WTC11 (cell line): ENCODE measurements at regions of chr5 and their contacts with region 1.

Region 1: GRCh38 chr5:8908055-8908683 is 637.7 kb downstream of the SEMA5A start:
- DNase-seq: peak; percentile 78
- ATAC-seq: peak; percentile 99
- H3K4me3 Mint-ChIP-seq: no peak overlapping the region
- H3K27ac Mint-ChIP-seq: no peak overlapping the region
- H3K4me1 Mint-ChIP-seq: peaks cover 4% of the 10 kb centered on the region; the same call in 1 of the 2 replicates
- H3K27me3 Mint-ChIP-seq: no peaks in the 10 kb centered on the region
- CTCF ChIP-seq: peak; percentile 92

Region 2: DNA sequence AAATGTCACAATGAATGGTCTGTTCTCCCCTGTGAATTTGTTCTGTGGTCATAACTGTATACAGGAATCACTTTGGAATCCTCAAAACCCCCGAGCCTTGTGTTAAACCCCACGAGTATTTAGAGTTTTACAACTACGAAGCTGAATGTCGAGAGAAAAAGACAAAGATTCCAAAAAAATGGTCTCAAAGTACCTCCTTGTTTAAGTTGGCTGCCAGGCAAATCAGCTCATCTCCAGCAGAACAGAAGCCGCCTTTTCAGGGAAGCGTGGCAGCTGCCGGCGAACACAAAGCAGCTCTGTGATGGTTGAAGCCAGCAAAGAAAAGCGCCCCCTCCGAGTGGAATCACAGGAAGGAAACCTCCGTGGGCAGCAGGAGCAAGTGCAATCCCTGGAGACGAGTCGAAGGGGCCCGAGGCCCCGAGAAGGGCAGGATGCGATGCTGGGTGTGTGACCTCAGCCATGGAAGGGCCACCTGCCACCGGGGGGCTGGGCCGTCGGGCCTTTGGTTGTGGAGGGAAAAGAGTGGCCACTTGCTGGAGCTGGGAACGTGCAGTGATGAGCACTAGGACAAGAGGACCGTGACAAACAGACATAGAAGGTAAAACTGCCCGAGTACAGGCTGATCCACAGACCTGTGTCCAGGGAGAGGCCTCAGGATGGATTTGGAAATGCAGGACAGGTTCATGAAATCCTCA is 68.7 kb before region 1 on chr5:
- CTCF ChIA-PET with region 1: interaction called, 15 read pairs
- POLR2A ChIA-PET with region 1: no interaction called
- DNase-seq: no peak
- ATAC-seq: no peak
- H3K4me3 Mint-ChIP-seq: no peak overlapping the region
- H3K27ac Mint-ChIP-seq: no peak overlapping the region
- H3K4me1 Mint-ChIP-seq: no peaks in the 10 kb centered on the region
- H3K27me3 Mint-ChIP-seq: peaks cover 5% of the 10 kb centered on the region
- CTCF ChIP-seq: no peak

Region 3: DNA sequence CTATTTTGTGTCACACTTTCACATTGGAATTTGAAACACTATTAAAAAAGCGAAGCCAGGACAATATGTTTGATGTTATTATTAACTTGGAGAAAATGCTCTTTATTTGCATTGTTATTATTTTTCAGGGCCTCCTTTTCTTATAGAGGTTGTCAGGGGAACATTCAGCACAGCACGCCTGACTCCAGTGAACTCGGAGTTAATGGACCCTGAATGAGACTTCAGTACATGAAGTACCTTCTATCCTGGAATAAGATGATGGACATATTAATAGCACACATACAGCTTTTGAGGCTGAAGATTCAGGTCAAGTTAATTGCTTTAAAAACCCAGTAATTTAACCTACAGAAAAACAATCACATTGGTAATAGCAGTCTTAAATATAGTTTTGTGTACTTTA is 15.2 kb before region 1 on chr5:
- CTCF ChIA-PET with region 1: interaction called, 19 read pairs
- POLR2A ChIA-PET with region 1: no interaction called
- DNase-seq: no peak
- ATAC-seq: no peak
- H3K4me3 Mint-ChIP-seq: no peak overlapping the region
- H3K27ac Mint-ChIP-seq: no peak overlapping the region
- H3K4me1 Mint-ChIP-seq: peaks cover 4% of the 10 kb centered on the region
- H3K27me3 Mint-ChIP-seq: no peaks in the 10 kb centered on the region
- CTCF ChIP-seq: no peak

Region 4: GRCh38 chr5:8923526-8923925 is 15.4 kb after region 1 on chr5:
- CTCF ChIA-PET with region 1: interaction called, 21 read pairs
- POLR2A ChIA-PET with region 1: no interaction called
- DNase-seq: no peak
- ATAC-seq: no peak
- H3K4me3 Mint-ChIP-seq: no peak overlapping the region
- H3K27ac Mint-ChIP-seq: no peak overlapping the region
- H3K4me1 Mint-ChIP-seq: no peaks in the 10 kb centered on the region
- H3K27me3 Mint-ChIP-seq: no peaks in the 10 kb centered on the region
- CTCF ChIP-seq: no peak

Region 5: DNA sequence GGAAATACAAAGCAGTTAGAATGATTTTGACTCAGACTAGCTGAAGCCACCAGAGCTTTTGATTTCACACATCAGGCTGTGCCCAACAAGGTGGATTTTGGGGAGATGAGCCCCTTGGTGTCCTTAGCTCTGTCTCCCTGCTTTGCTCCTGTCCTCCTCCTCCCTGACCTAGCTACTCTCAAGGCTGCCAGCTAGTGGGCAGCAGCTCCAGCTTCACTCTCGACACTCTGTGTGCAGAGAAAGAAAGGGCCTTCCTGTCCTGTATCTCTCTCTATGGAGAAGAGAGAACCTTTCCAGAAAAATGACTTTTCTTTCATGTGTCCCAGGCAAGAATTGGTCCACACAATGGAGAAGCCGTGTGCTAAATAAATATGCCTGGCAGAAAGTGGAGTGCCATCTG is 191.5 kb after region 1 on chr5:
- CTCF ChIA-PET with region 1: interaction called, 10 read pairs
- POLR2A ChIA-PET with region 1: no interaction called
- DNase-seq: no peak
- ATAC-seq: peak; percentile 75
- H3K4me3 Mint-ChIP-seq: no peak overlapping the region
- H3K27ac Mint-ChIP-seq: no peak overlapping the region
- H3K4me1 Mint-ChIP-seq: no peaks in the 10 kb centered on the region
- H3K27me3 Mint-ChIP-seq: no peaks in the 10 kb centered on the region
- CTCF ChIP-seq: no peak